CD4-positive, alpha-beta T cell (primary cell): ENCODE measurements at regions of chr5 and their contacts with region 1.

Region 1: GRCh38 chr5:96807075-96807654 is 580 bp downstream of the ERAP1 start:
- DNase-seq: peak in 4 of 14 experiments; percentile 37 to 52 (median 38)
- ATAC-seq: peak; percentile 7
- H3K4me3 ChIP-seq: peak overlapping the region; percentile 79
- H3K4me3 Mint-ChIP-seq: peak overlapping the region; percentile 98
- H3K27ac ChIP-seq: peak overlapping the region; percentile 91 to 96
- H3K27ac Mint-ChIP-seq: peak overlapping the region; percentile 99
- H3K4me1 ChIP-seq: peaks cover 62% of the 10 kb centered on the region
- H3K4me1 Mint-ChIP-seq: peaks cover 86% of the 10 kb centered on the region
- H3K27me3 ChIP-seq: no peaks in the 10 kb centered on the region
- H3K27me3 Mint-ChIP-seq: peaks cover 5% of the 10 kb centered on the region
- CTCF ChIP-seq: no peak

Region 2: DNA sequence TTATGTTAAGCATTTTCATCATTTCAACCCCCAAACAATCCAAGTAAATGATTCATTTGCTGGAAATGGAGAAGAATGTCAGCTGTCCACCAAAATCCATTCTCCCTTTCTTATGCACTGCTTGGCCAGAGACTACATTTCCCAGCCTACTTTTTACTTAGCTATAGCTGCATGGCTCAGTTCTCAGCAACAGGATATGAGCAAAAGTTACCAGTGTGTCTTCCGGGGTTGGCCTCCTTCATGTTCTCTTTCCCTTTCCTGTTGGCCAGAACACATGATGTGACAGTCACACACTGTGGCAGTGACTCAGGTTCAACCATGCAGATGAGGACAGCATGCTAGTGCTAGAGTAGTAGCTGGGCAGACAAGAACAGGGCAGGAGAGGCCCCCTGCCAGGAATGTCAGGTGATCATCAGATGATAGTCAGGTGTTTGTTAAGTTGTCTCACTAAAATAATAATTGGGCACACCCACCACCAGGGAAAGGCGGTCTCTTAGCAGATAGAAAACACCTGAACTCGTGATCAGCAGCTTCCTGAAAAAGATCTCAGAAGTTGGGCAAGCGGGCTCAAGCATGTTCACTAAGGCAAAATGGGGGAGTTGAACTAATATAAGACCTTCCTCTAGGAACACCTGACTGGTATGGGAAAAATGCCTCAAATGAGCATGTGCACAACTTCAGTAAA is 1175.0 kb before region 1 on chr5:
- CTCF ChIA-PET with region 1: no interaction called
- POLR2A ChIA-PET with region 1: no interaction called
- intact Hi-C with region 1: loop called in 1 of 2 experiments (anchors 10 kb)
- DNase-seq: peak; percentile 44 to 90 (median 62)
- ATAC-seq: peak; percentile 98
- H3K4me3 ChIP-seq: no peak overlapping the region
- H3K4me3 Mint-ChIP-seq: peak overlapping the region; percentile 9
- H3K27ac ChIP-seq: peak overlapping the region; percentile 16 to 80
- H3K27ac Mint-ChIP-seq: peak overlapping the region; percentile 89
- H3K4me1 ChIP-seq: peaks cover 19% of the 10 kb centered on the region
- H3K4me1 Mint-ChIP-seq: peaks cover 42% of the 10 kb centered on the region
- H3K27me3 ChIP-seq: no peaks in the 10 kb centered on the region
- H3K27me3 Mint-ChIP-seq: no peaks in the 10 kb centered on the region
- CTCF ChIP-seq: no peak

Region 3: GRCh38 chr5:96692441-96692840 is 114.7 kb before region 1 on chr5:
- CTCF ChIA-PET with region 1: no interaction called
- POLR2A ChIA-PET with region 1: no interaction called
- intact Hi-C with region 1: no loop called
- DNase-seq: peak in 2 of 14 experiments; percentile 10 to 23
- ATAC-seq: no peak
- H3K4me3 ChIP-seq: no peak overlapping the region
- H3K4me3 Mint-ChIP-seq: no peak overlapping the region
- H3K27ac ChIP-seq: no peak overlapping the region
- H3K27ac Mint-ChIP-seq: no peak overlapping the region
- H3K4me1 ChIP-seq: no peaks in the 10 kb centered on the region
- H3K4me1 Mint-ChIP-seq: peaks cover 4% of the 10 kb centered on the region
- H3K27me3 ChIP-seq: no peaks in the 10 kb centered on the region
- H3K27me3 Mint-ChIP-seq: no peaks in the 10 kb centered on the region
- CTCF ChIP-seq: no peak

Region 4: DNA sequence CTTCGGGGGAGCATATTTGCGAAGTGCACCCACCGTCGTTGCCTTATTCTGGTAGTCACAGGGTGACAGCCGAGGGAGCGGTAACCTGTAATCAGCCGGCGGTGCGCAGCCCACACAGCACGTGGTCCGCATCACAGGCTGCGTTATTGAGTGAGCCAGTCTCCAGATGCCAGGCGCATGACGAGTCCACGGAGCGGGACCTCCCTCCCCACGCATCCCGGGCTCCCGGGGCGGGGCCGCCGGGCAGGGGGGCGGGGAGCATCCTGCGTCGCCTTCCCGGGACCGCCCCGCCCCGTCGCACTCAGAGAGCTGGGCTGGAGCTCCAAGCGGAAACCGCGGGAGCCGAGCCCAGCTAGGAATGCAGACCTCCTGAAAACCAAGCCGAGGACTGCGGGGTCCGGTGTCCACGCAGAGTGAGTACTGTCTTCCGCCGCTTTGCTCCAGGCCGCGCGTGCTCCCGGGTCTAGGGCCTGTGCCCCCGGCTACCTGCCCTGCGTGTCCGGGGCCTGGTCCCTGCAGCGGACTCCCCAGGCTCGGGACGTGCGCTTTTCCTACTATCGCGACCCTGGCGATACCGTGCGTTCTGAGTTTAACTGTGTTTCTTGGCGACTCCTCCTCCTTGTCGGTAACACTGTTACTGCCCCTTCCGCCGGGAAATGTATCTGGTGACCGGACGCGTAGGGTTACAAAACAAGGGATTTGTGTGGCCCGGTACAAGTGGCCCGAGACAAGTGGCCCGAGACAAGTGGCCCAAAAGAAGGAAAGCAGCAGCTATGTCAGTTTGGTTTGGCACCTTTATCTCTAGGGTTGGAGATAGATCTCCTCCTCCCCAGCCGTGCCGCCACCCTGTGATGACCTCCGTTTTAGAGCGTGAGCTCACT is 104.4 kb before region 1 on chr5:
- CTCF ChIA-PET with region 1: no interaction called
- POLR2A ChIA-PET with region 1: interaction called, 11 read pairs
- intact Hi-C with region 1: no loop called
- DNase-seq: peak; percentile 50 to 90 (median 70)
- ATAC-seq: peak; percentile 81
- H3K4me3 ChIP-seq: peak overlapping the region; percentile 64
- H3K4me3 Mint-ChIP-seq: peak overlapping the region; percentile 90
- H3K27ac ChIP-seq: peak overlapping the region; percentile 69 to 91
- H3K27ac Mint-ChIP-seq: peak overlapping the region; percentile 87
- H3K4me1 ChIP-seq: peaks cover 23% of the 10 kb centered on the region
- H3K4me1 Mint-ChIP-seq: peaks cover 45% of the 10 kb centered on the region
- H3K27me3 ChIP-seq: no peaks in the 10 kb centered on the region
- H3K27me3 Mint-ChIP-seq: no peaks in the 10 kb centered on the region
- CTCF ChIP-seq: no peak

Region 5: DNA sequence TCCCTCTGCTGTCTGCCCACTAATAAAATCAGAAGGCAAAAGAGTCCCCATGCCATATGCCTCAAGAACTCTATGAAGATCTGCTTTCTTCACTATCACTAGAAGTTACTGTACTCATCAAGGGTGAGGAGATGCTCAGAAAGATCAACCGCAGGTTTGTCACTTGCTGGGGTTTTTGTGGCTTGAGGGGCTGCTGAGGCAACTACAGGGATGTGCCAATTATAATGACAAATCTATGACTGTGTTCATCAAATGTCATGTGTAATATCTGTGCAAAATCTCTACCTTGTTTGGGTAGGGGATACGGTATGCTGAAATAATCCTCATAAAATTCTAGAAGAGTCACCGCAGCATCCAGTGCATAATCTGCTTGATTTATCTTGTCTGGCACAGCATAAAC is 12.4 kb before region 1 on chr5:
- CTCF ChIA-PET with region 1: interaction called, 5 read pairs
- POLR2A ChIA-PET with region 1: interaction called, 10 read pairs
- intact Hi-C with region 1: no loop called
- DNase-seq: peak in 10 of 14 experiments; percentile 14 to 51 (median 28)
- ATAC-seq: peak; percentile 89
- H3K4me3 ChIP-seq: no peak overlapping the region
- H3K4me3 Mint-ChIP-seq: no peak overlapping the region
- H3K27ac ChIP-seq: no peak overlapping the region
- H3K27ac Mint-ChIP-seq: peak overlapping the region; percentile 34
- H3K4me1 ChIP-seq: peaks cover 22% of the 10 kb centered on the region
- H3K4me1 Mint-ChIP-seq: peaks cover 42% of the 10 kb centered on the region
- H3K27me3 ChIP-seq: no peaks in the 10 kb centered on the region
- H3K27me3 Mint-ChIP-seq: no peaks in the 10 kb centered on the region
- CTCF ChIP-seq: no peak

Region 6: DNA sequence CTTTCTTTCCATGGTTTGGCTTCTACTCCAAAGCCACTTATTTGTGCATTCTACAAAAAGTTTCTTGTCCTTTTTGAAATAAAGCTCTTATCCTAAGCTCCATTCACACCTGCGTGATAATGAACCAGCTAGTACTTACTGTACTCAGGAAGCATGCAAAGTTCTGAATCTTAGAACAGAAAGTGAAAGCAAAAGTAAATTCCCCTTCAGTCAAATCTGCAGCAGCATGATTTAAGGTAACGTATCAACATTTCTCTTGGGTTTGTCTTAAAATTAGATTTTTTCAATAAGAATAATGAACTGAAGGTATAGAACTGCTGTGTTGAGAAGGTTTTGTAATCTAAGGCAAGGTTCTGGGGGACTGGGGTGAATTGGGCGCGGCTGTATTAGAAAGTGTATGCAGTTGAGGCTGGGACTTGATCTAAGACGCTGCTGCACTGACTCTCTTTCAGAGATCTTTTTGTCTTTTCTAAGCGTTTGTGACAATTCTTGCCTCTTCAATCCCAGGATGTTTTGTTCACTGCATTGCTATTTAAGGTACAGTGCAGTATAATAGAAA is 69.2 kb after region 1 on chr5 and contains the start of gene ERAP2:
- CTCF ChIA-PET with region 1: interaction called, 8 read pairs
- POLR2A ChIA-PET with region 1: interaction called, 40 read pairs
- intact Hi-C with region 1: loop called in 1 of 2 experiments (anchors 5 kb)
- DNase-seq: peak in 5 of 14 experiments; percentile 13 to 81 (median 75)
- ATAC-seq: peak; percentile 77
- H3K4me3 ChIP-seq: peak within 1 kb of the TSS; percentile 91
- H3K4me3 Mint-ChIP-seq: peak within 1 kb of the TSS; percentile 98
- H3K27ac ChIP-seq: peak within 1 kb of the TSS; percentile 83 to 90
- H3K27ac Mint-ChIP-seq: peak within 1 kb of the TSS; percentile 92
- H3K4me1 ChIP-seq: peaks cover 46% of the 10 kb centered on the region
- H3K4me1 Mint-ChIP-seq: peaks cover 81% of the 10 kb centered on the region
- H3K27me3 ChIP-seq: no peaks in the 10 kb centered on the region
- H3K27me3 Mint-ChIP-seq: no peaks in the 10 kb centered on the region
- CTCF ChIP-seq: no peak
- total RNA-seq, gene ERAP2: 56.6 to 61.4 TPM

Region 7: DNA sequence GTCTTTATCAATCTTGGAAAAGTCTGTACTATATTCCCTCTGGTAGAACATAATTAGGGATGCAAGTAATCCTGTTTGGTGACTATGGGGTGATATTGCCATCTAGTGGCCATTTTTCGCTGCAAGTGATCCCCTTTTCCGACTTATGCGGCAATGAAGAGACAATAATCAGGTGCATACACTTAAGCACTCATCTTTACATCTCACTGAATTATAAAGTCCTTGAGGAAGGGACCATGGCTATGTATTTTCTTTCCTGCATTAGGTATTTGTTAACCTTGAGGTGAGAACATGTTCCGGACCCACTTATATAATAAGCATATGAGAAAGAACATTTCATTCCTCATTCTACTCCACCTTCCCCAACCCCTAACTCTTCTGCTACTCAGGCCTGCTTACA is 354.9 kb after region 1 on chr5:
- CTCF ChIA-PET with region 1: no interaction called
- POLR2A ChIA-PET with region 1: interaction called, 7 read pairs
- intact Hi-C with region 1: loop called in 1 of 2 experiments (anchors 5 kb)
- DNase-seq: peak in 12 of 14 experiments; percentile 16 to 82 (median 34)
- ATAC-seq: peak; percentile 49
- H3K4me3 ChIP-seq: no peak overlapping the region
- H3K4me3 Mint-ChIP-seq: no peak overlapping the region
- H3K27ac ChIP-seq: no peak overlapping the region
- H3K27ac Mint-ChIP-seq: no peak overlapping the region
- H3K4me1 ChIP-seq: no peaks in the 10 kb centered on the region
- H3K4me1 Mint-ChIP-seq: peaks cover 14% of the 10 kb centered on the region
- H3K27me3 ChIP-seq: no peaks in the 10 kb centered on the region
- H3K27me3 Mint-ChIP-seq: no peaks in the 10 kb centered on the region
- CTCF ChIP-seq: peak; percentile 98